SK-N-SH (cell line): ENCODE measurements at regions of chr14 and their contacts with region 1.

Region 1: DNA sequence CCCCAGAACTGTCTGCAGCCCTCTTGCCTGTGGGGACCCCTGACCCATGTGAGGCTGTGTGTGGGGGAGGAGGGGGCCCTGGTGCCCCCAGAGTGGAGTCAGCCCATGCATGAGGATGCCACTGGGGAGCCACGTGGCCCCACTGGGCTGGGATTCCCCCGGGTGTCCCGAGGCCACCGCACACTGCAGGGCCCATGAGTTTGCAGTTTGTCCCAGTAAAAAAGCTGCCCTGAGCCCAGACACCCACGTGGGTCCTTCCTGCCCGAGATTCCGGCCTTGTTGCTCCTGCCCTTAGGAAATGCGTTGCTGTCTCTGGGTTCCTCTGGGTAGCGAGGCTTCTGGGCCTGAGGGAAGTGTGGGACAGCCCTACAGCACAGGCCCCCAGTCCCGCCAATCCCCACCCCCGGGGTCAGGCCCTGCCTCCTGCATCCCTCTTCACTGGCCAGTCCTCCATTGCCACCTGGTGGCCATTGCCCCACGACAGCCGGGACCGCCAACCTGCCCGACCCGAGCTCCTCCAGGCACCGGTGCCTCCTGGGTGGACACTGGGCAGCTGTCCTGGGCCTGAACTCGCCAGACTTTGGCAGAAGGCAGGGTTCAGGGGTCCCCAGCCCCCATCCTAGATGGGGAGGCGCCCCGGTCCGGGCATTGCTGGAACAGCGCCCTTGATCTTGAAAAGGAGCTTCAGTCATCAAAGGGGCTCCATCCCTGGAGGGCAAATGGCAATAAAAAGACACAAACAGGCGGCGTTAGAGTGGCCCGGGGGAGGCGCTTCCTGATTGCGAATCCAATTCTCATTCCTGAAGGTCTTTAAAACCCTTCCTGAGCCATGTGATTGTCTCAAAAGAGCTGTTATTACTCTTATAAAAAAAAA is 15.6 kb upstream of the C14orf180 start:
- DNase-seq: peak; percentile 98
- H3K4me3 ChIP-seq: no peak overlapping the region; a peak in 1 of 4 replicates
- H3K27ac ChIP-seq: peak overlapping the region in 1 of 2 experiments; percentile 71; a peak in 2 of 4 replicates
- H3K4me1 ChIP-seq: peaks cover 0 to 65% of the 10 kb centered on the region in 2 experiments; a peak in 1 of 4 replicates
- H3K27me3 ChIP-seq: no peaks in the 10 kb centered on the region
- CTCF ChIP-seq: peak; percentile 78
- EP300 ChIP-seq: no peak
- RAD21 ChIP-seq: peak; percentile 94

Region 2: GRCh38 chr14:104078031-104078455 is 485.9 kb before region 1 on chr14:
- CTCF ChIA-PET with region 1: interaction called, 36 read pairs
- POLR2A ChIA-PET with region 1: no interaction called
- DNase-seq: peak; percentile 92
- H3K4me3 ChIP-seq: peak overlapping the region in 1 of 2 experiments; percentile 33; a peak in 1 of 4 replicates
- H3K27ac ChIP-seq: no peak overlapping the region
- H3K4me1 ChIP-seq: peaks cover 0 to 10% of the 10 kb centered on the region in 2 experiments; a peak in 1 of 4 replicates
- H3K27me3 ChIP-seq: no peaks in the 10 kb centered on the region; the same call in 1 of the 2 replicates
- CTCF ChIP-seq: peak; percentile 99
- EP300 ChIP-seq: no peak
- RAD21 ChIP-seq: peak; percentile 98

Region 3: GRCh38 chr14:104144911-104145745 is 418.9 kb before region 1 on chr14:
- CTCF ChIA-PET with region 1: interaction called, 33 read pairs
- POLR2A ChIA-PET with region 1: no interaction called
- DNase-seq: peak; percentile 80
- H3K4me3 ChIP-seq: no peak overlapping the region
- H3K27ac ChIP-seq: peak overlapping the region in 1 of 2 experiments; percentile 99; a peak in 1 of 4 replicates
- H3K4me1 ChIP-seq: peaks cover 10 to 97% of the 10 kb centered on the region in 2 experiments; a peak in 2 of 4 replicates
- H3K27me3 ChIP-seq: no peaks in the 10 kb centered on the region
- CTCF ChIP-seq: no peak
- EP300 ChIP-seq: no peak
- RAD21 ChIP-seq: no peak

Region 4: DNA sequence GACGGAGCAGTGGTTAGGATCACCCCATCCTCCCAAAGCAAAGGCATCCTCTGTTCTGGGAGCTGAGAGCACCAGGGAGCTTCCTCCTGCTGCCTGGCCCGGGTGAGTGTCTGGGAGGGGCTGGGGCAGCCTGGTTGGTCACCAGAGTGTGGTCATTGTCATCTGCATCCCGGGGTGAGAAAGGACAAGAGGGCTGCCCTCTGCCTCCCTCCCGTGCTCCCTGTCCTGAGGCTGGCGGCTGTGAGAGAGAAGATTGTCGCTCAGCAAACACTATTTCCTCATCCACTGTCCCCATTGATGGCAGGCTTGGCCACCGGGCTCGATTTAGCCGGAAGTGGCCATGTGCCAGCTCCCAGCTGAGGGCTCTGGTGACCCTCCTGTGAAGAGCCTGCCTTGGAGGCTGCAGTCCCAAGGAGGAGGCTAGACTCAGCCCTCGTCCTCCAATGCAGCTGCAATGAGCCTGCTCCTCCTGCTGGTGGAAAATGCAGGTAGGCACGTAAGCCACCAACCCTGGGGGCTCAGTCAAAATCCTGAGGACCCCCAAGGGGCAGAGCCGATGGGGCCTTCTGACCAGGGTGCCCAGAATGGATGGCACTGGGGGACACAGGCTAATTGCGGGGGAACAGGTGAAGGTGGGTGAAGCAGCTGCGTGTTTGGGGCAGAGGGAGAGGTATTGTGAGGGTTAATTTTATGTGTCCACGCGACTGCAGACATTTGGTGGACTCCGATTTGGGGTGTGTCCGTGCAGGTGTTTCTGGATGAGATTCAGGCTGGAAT is 269.9 kb before region 1 on chr14:
- CTCF ChIA-PET with region 1: interaction called, 55 read pairs
- POLR2A ChIA-PET with region 1: no interaction called
- DNase-seq: no peak
- H3K4me3 ChIP-seq: no peak overlapping the region
- H3K27ac ChIP-seq: peak overlapping the region in 1 of 2 experiments; percentile 94; a peak in 1 of 4 replicates
- H3K4me1 ChIP-seq: peaks cover 3 to 87% of the 10 kb centered on the region in 2 experiments; a peak in 2 of 4 replicates
- H3K27me3 ChIP-seq: no peaks in the 10 kb centered on the region
- CTCF ChIP-seq: peak; percentile 21; the same call in 1 of the 2 replicates
- EP300 ChIP-seq: no peak
- RAD21 ChIP-seq: peak; percentile 48

Region 5: DNA sequence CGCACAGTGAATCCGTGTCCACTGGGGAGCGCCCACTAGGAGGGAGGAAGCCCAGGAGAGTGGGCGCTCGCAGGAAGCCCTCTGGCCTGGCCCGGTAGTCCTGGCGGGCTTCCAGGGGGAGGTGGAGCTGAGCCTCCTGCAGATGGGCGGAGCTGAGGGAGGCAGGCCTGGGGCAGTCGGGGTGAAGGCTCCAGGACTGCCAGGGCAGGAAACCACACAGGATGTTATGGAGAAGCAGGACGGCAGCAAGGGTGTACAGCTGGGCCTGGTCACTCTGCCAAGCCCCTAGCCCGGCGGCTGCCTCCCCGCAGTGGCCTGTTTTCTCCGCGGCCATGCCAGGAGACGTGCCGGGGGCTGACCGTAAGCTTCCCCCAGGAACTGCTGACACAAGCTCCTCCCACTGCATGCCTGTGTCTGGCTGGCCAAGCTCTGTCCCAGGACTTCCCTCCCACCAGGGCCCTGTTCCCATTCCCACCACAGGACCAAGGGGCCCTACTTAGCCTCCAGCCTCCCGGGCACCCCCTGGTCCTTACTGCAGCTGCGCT is 127.9 kb before region 1 on chr14:
- CTCF ChIA-PET with region 1: interaction called, 14 read pairs
- POLR2A ChIA-PET with region 1: interaction called, 3 read pairs
- DNase-seq: peak; percentile 91
- H3K4me3 ChIP-seq: no peak overlapping the region
- H3K27ac ChIP-seq: peak overlapping the region in 1 of 2 experiments; percentile 71; a peak in 2 of 4 replicates
- H3K4me1 ChIP-seq: peaks cover 0 to 27% of the 10 kb centered on the region in 2 experiments; a peak in 1 of 4 replicates
- H3K27me3 ChIP-seq: no peaks in the 10 kb centered on the region
- CTCF ChIP-seq: no peak
- EP300 ChIP-seq: no peak
- RAD21 ChIP-seq: no peak

Region 6: GRCh38 chr14:104586832-104587620 is 23.0 kb after region 1 on chr14:
- CTCF ChIA-PET with region 1: interaction called, 96 read pairs
- POLR2A ChIA-PET with region 1: no interaction called
- DNase-seq: peak; percentile 82
- H3K4me3 ChIP-seq: no peak overlapping the region
- H3K27ac ChIP-seq: peak overlapping the region in 1 of 2 experiments; percentile 97; a peak in 2 of 4 replicates
- H3K4me1 ChIP-seq: peaks cover 0 to 95% of the 10 kb centered on the region in 2 experiments; a peak in 1 of 4 replicates
- H3K27me3 ChIP-seq: no peaks in the 10 kb centered on the region
- CTCF ChIP-seq: no peak
- EP300 ChIP-seq: peak in 1 of 2 experiments; percentile 40; a peak in 1 of 4 replicates
- RAD21 ChIP-seq: no peak

Region 7: GRCh38 chr14:104650057-104650981 is 86.3 kb after region 1 on chr14:
- CTCF ChIA-PET with region 1: no interaction called
- POLR2A ChIA-PET with region 1: no interaction called
- DNase-seq: peak; percentile 98
- H3K4me3 ChIP-seq: peak overlapping the region; percentile 46 to 58
- H3K27ac ChIP-seq: no peak overlapping the region; a peak in 1 of 4 replicates
- H3K4me1 ChIP-seq: peaks cover 0 to 2% of the 10 kb centered on the region in 2 experiments; a peak in 1 of 4 replicates
- H3K27me3 ChIP-seq: no peaks in the 10 kb centered on the region
- CTCF ChIP-seq: peak; percentile 87
- EP300 ChIP-seq: no peak
- RAD21 ChIP-seq: peak; percentile 76